ENCODE measurements at regions of chr4 and their contacts with region 1.

Region 1: DNA sequence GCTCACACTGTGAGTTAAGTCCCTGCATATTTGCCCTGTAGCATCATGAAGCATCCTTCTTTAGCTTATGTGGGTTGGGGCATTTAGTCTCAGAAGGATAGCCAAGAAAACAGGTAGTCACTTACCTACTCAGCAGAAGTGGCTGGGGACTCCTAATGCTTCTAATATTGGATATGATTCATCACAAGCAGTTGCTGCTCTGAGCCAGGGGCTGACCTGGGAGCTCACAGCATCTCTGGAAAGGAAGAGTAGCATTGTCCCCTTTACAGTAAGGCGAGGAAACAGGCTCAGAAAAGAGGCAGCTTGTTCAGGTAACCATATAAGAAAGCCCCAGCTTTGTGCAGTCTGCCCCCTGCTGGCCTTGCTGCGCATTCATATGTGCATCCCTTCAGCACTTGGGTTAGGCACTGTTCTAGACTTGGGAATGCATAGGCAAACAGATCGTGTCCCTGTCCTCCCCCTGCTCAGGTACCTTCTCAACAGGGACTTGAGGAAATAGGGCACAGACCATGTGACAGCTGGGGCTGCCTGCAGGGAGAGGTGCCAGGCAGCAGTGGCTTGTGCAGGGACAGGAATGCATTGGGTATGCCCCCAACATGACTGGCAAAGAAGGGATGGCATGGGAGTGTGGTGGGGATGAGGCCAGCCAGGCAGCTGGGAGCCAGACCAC is 35.7 kb upstream of the TBC1D14 start:
- DNase-seq: peak in 1 of 2 experiments; percentile 82
- H3K4me3 ChIP-seq: no peak overlapping the region
- H3K27ac ChIP-seq: no peak overlapping the region
- H3K4me1 ChIP-seq: no peaks in the 10 kb centered on the region
- H3K27me3 ChIP-seq: no peaks in the 10 kb centered on the region
- CTCF ChIP-seq: peak; percentile 76 to 93 (median 76)
- EP300 ChIP-seq: no peak
- POLR2A ChIP-seq: no peak
- RAD21 ChIP-seq: peak; percentile 81 to 86

Region 2: GRCh38 chr4:6716018-6716911 is 157.7 kb before region 1 on chr4 and contains the start of gene BLOC1S4:
- CTCF ChIA-PET with region 1: interaction called, 182 read pairs
- POLR2A ChIA-PET with region 1: interaction called, 6 read pairs
- DNase-seq: peak; percentile 70 to 86
- H3K4me3 ChIP-seq: peak within 1 kb of the TSS; percentile 84 to 96 (median 88)
- H3K27ac ChIP-seq: peak within 1 kb of the TSS; percentile 68; the same call in 1 of the 2 replicates
- H3K4me1 ChIP-seq: peaks cover 0 to 4% (median 0%) of the 10 kb centered on the region in 4 experiments; a peak in 2 of 7 replicates
- H3K27me3 ChIP-seq: no peaks in the 10 kb centered on the region; a peak in 3 of 7 replicates
- CTCF ChIP-seq: no peak
- EP300 ChIP-seq: no peak
- POLR2A ChIP-seq: peak in 1 of 2 experiments; percentile 78; a peak in 2 of 3 replicates
- RAD21 ChIP-seq: no peak
- total RNA-seq, gene BLOC1S4: 19.1 and 20.5 TPM in 2 replicates

Region 3: DNA sequence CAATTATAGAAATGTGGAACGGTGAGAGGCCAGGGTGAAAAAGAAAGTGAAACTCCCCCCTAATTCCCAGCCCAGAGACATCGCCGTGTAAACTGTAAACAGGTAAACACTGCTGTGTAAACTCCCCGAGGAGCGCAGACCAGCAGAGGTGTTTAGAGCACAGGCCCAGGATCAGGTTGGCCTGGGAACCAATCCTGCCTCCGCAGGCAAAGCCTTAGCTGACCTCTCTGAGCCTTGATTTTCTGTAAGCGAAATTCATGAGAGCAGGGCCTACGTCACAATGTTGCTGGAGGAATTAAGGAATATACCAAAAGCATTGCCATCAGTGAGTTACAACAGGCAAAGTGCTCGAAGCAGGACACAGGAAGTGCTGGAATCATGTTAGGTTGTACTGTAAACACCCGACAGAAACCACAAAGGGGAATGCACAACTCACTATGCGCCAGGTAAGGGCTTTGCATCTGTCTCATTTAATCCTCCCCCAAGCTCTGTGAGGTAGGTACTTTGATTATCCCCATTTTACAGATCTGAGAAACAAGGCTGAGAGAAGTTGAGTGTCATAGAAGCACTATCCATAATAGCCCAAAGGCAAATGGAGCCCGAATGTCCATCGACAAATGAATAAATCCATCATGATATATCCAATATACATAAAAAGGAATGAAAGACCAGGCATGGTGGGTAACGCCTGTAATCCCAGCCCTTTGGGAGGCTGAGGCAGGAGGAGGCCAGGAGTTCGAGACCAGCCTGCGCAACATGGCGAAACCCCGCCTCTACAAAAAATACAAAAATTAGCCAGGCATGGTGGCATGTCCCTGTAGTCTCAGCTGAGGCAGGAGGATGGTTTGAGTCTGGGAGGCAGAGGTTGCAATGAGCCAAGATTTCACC is 122.1 kb before region 1 on chr4:
- CTCF ChIA-PET with region 1: no interaction called
- POLR2A ChIA-PET with region 1: no interaction called
- DNase-seq: no peak
- H3K4me3 ChIP-seq: no peak overlapping the region
- H3K27ac ChIP-seq: no peak overlapping the region
- H3K4me1 ChIP-seq: peaks cover 0 to 6% (median 0%) of the 10 kb centered on the region in 4 experiments; a peak in 2 of 7 replicates
- H3K27me3 ChIP-seq: no peaks in the 10 kb centered on the region
- CTCF ChIP-seq: no peak
- EP300 ChIP-seq: no peak
- POLR2A ChIP-seq: no peak
- RAD21 ChIP-seq: no peak

Region 4: DNA sequence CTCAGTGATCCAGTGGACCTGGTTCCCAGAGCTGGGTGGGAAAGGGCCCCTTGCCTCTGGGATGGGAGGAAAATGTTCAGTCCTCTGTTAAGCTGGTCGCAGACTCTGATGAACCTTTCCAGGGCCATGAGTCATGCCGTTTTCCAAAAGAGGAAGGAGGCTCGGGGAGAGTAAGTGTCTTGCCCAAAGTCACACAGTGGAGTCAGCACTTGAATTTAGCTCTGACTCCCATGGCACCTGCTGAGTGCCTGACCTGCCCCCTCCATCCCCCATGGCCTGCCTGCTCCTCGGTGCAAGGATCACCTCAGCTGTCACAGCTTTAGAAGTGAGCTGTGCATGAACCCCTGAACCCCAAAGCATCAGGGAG is 105.4 kb before region 1 on chr4:
- CTCF ChIA-PET with region 1: interaction called, 33 read pairs
- POLR2A ChIA-PET with region 1: no interaction called
- DNase-seq: no peak
- H3K4me3 ChIP-seq: no peak overlapping the region
- H3K27ac ChIP-seq: no peak overlapping the region
- H3K4me1 ChIP-seq: peaks cover 0 to 3% (median 1%) of the 10 kb centered on the region in 4 experiments; a peak in 1 of 7 replicates
- H3K27me3 ChIP-seq: no peaks in the 10 kb centered on the region
- CTCF ChIP-seq: no peak
- EP300 ChIP-seq: no peak
- POLR2A ChIP-seq: no peak
- RAD21 ChIP-seq: no peak

Region 5: DNA sequence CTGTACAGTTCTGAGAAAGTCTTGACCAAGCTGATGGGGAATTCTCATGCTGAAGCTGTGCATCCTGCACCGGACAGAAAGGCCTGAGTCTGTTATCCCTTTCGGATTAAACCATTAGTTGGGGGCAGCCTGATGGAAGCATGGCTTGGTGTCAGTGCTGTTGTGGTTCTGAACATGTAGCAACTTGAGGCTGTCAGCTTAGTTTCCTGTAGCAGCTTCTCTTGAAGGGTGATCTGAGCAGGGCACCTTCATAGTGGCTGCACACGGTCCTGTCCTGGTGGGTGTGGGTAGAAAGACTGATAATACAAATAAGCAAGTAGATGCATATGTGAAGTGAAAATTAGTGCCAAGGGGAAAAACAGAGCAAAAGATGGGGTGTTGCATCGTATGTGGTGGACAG is 79.7 kb before region 1 on chr4:
- CTCF ChIA-PET with region 1: interaction called, 15 read pairs
- POLR2A ChIA-PET with region 1: no interaction called
- DNase-seq: no peak
- H3K4me3 ChIP-seq: no peak overlapping the region
- H3K27ac ChIP-seq: no peak overlapping the region
- H3K4me1 ChIP-seq: no peaks in the 10 kb centered on the region
- H3K27me3 ChIP-seq: no peaks in the 10 kb centered on the region
- CTCF ChIP-seq: no peak
- EP300 ChIP-seq: no peak
- POLR2A ChIP-seq: no peak
- RAD21 ChIP-seq: no peak

Region 6: GRCh38 chr4:6855692-6856297 is 18.1 kb before region 1 on chr4:
- CTCF ChIA-PET with region 1: interaction called, 42 read pairs
- POLR2A ChIA-PET with region 1: interaction called, 6 read pairs
- DNase-seq: no peak
- H3K4me3 ChIP-seq: no peak overlapping the region
- H3K27ac ChIP-seq: no peak overlapping the region
- H3K4me1 ChIP-seq: peaks cover 0 to 3% (median 1%) of the 10 kb centered on the region in 4 experiments; a peak in 2 of 7 replicates
- H3K27me3 ChIP-seq: no peaks in the 10 kb centered on the region
- CTCF ChIP-seq: no peak
- EP300 ChIP-seq: no peak
- POLR2A ChIP-seq: no peak
- RAD21 ChIP-seq: no peak

Region 7: GRCh38 chr4:6991771-6992557 is 118.0 kb after region 1 on chr4:
- CTCF ChIA-PET with region 1: no interaction called
- POLR2A ChIA-PET with region 1: no interaction called
- DNase-seq: no peak
- H3K4me3 ChIP-seq: no peak overlapping the region
- H3K27ac ChIP-seq: no peak overlapping the region
- H3K4me1 ChIP-seq: peaks cover 5 to 12% (median 8%) of the 10 kb centered on the region in 4 experiments
- H3K27me3 ChIP-seq: no peaks in the 10 kb centered on the region
- CTCF ChIP-seq: no peak
- EP300 ChIP-seq: no peak
- POLR2A ChIP-seq: no peak
- RAD21 ChIP-seq: no peak

Measured in H1 (cell line).